Adrenal gland (tissue), 19 donors: ENCODE measurements at regions of chrX and their contacts with region 1.

Region 1: GRCh38 chrX:153609917-153610428 is 11.0 kb upstream of the CCNQ start:
- DNase-seq: peak; percentile 50 to 81 (median 69)
- H3K4me3 ChIP-seq: peak overlapping the region in 1 of 4 donors; percentile 42
- H3K27ac ChIP-seq: no peak overlapping the region
- H3K4me1 ChIP-seq: no peaks in the 10 kb centered on the region
- H3K27me3 ChIP-seq: peaks cover 17% of the 10 kb centered on the region
- CTCF ChIP-seq: peak; percentile 42 to 75 (median 64)
- POLR2A ChIP-seq: no peak

Region 2: DNA sequence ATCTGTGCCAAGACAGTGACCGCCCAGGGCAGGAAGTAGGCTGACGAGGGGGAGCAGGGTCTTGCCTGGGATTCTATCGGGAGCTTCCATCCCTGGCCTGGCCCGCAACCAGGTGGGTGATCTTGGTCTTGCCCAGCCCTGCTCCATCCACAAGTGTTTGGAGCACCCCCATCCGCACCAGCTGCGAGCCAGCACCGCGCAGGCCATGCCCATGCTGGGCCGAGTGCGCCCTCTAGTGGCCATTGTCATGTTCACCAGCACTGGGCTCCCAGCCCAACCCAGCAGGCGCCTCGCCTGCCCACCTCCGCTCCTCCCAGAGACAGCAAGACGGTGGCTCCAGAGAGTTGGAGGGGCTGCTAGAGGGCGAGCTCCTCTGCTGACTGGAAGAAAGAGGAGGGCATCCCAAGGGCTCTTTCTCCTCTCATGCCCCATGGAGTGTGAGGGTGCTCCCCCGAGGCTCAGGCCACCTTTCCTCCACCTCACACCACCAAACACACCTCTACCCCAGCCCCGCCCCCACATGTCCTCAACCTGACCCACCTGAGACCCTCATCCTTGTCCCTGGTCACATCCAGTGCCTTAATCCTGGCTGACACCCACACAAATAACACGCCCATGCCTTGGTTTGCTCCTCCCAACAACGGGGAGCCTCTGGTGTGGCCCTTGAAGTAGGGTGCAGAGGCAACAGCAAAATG is 102.3 kb before region 1 on chrX:
- intact Hi-C with region 1: no loop called
- DNase-seq: peak; percentile 78 to 90 (median 83)
- H3K4me3 ChIP-seq: no peak overlapping the region
- H3K27ac ChIP-seq: no peak overlapping the region
- H3K4me1 ChIP-seq: no peaks in the 10 kb centered on the region
- H3K27me3 ChIP-seq: peaks cover 9% of the 10 kb centered on the region
- CTCF ChIP-seq: peak; percentile 75 to 93 (median 86)
- POLR2A ChIP-seq: no peak

Region 3: DNA sequence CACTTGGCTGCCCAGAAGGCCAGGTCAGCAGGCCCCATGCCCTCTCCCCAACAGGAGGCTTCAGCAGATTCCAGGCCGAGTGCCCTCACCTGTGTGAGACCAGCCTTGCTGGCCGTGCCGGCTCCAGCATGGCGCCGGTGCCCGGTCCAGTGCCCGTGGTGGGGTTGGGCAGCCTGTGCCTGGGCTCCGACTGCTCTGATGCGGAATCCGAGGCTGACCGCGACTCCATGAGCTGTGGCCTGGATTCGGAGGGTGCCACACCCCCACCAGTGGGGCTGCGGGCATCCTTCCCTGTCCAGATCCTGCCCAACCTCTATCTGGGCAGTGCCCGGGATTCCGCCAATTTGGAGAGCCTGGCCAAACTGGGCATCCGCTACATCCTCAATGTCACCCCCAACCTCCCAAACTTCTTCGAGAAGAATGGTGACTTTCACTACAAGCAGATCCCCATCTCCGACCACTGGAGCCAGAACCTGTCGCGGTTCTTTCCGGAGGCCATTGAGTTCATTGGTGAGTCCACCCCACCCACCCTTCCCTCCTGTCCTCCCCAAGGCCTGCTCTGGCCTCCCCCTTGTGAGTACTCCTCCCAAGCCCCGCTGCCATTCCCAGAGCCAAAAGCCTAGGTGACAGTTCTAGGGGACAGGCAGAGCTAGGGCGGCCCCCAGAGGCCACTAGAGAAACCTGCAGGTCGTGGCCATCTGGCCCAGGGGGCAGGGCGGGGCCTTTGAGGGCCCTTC is 39.4 kb after region 1 on chrX:
- intact Hi-C with region 1: loop called in 1 of 2 experiments (anchors 5 kb)
- DNase-seq: peak; percentile 23 to 56 (median 50)
- H3K4me3 ChIP-seq: no peak overlapping the region
- H3K27ac ChIP-seq: no peak overlapping the region
- H3K4me1 ChIP-seq: no peaks in the 10 kb centered on the region
- H3K27me3 ChIP-seq: peaks cover 50% of the 10 kb centered on the region
- CTCF ChIP-seq: peak; percentile 20 to 52 (median 36)
- POLR2A ChIP-seq: no peak